ENCODE measurements at regions of chr13 and their contacts with region 1.

Region 1: GRCh38 chr13:45194081-45194939 is 6.5 kb downstream of the KCTD4 start:
- DNase-seq: no peak
- H3K4me3 ChIP-seq: no peak overlapping the region
- H3K27ac ChIP-seq: no peak overlapping the region
- H3K4me1 ChIP-seq: no peaks in the 10 kb centered on the region
- H3K27me3 ChIP-seq: no peaks in the 10 kb centered on the region
- CTCF ChIP-seq: no peak

Region 2: DNA sequence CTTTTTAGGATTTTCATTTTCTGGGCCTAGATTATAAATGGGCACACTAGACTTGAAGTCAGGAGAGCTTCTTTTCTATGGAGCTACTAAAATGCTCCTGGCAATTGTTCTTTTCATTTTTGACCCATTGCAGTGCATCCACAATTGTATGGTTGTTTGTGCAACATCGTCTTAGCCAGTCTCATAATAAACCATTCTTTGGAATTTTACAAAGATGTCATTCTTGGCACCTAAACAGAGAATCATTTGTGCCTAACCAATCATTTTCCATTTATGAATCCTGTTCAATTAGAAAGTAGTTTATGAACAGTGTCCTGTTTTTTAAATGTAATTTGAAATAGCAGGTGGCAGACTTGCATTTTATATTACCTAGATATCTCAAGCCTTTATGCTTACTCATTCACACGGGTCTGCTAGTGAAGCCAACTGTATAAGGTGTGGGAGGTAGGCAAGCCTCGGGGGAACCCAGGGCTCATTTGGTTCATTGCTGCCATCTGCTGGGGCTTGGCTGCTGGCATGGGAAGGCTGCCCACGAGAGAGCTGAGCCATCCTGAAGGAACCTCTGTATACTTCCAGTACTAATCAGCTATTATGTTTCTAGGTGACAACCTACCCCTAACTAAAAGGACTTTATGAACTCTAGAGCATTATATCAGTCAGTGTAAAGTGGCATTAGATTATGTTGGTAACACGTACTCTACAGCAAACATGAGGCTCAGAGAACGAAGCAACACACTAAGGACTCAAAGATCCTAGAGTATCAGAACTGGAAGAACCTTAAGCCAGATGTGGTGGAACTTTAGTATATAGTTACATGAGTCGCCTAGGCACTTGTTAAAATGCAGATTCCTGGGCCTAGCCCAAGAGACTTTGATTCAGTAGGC is 86.7 kb after region 1 on chr13:
- intact Hi-C with region 1: loop called (anchors 10 kb)
- DNase-seq: peak; percentile 76
- H3K4me3 ChIP-seq: no peak overlapping the region
- H3K27ac ChIP-seq: no peak overlapping the region
- H3K4me1 ChIP-seq: no peaks in the 10 kb centered on the region
- H3K27me3 ChIP-seq: no peaks in the 10 kb centered on the region
- CTCF ChIP-seq: peak; percentile 69

Region 3: GRCh38 chr13:45320876-45321629 is 126.7 kb after region 1 on chr13:
- intact Hi-C with region 1: no loop called
- DNase-seq: no peak
- H3K4me3 ChIP-seq: no peak overlapping the region
- H3K27ac ChIP-seq: no peak overlapping the region
- H3K4me1 ChIP-seq: no peaks in the 10 kb centered on the region
- H3K27me3 ChIP-seq: no peaks in the 10 kb centered on the region
- CTCF ChIP-seq: no peak

Region 4: DNA sequence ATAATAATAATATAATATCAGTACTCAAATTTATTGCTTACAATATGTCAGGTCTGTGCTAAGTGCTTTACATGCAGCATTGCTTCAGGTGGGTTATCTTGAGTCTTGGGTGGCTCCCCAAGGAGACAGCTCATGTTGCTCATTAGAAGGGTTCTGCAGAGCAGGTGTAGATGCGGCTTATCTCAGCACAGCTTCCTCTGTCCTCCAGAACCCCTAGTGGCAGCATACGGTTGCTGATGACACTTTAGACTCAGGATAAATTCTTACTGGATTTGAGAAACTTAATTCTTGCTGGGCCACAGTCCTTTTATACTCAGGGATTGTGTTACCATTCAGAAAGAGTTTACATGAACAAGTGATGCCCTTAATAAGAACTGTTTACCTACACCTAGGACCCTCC is 279.3 kb after region 1 on chr13:
- intact Hi-C with region 1: no loop called
- DNase-seq: no peak
- H3K4me3 ChIP-seq: no peak overlapping the region
- H3K27ac ChIP-seq: no peak overlapping the region
- H3K4me1 ChIP-seq: peaks cover 2% of the 10 kb centered on the region
- H3K27me3 ChIP-seq: no peaks in the 10 kb centered on the region
- CTCF ChIP-seq: peak; percentile 35

Measured in colonic mucosa (tissue), 4 donors.